MCF 10A (cell line): ENCODE measurements at regions of chr1 and their contacts with region 1.

Region 1: GRCh38 chr1:165914136-165914798 is 86.9 kb downstream of the UCK2 start:
- DNase-seq: peak; percentile 88
- H3K4me3 Mint-ChIP-seq: no peak overlapping the region
- H3K27ac Mint-ChIP-seq: peak overlapping the region; percentile 37
- H3K4me1 Mint-ChIP-seq: peaks cover 22% of the 10 kb centered on the region
- H3K27me3 Mint-ChIP-seq: no peaks in the 10 kb centered on the region
- CTCF ChIP-seq: peak; percentile 96

Region 2: DNA sequence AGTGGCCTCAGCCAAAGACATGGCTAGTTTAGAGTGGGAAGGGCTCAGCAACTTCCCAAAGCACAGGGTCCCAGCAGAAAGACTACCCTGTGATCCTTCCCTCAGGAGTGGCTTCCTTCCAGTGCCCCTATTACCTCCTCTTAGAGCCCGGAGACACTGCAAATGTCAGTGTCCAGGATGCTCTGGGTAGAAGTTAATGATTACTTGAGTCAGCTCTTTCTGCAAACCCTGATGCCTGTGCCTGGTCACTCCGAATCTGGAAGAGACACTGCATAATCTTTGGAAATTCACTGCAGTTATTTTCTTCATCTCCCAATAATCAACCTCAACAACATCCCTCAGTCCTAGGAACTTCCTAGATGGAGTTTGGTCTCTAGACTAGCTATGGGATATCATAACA is 310.5 kb before region 1 on chr1:
- CTCF ChIA-PET with region 1: interaction called, 161 read pairs
- POLR2A ChIA-PET with region 1: interaction called, 4 read pairs
- intact Hi-C with region 1: loop called (anchors 1 kb)
- DNase-seq: no peak
- H3K4me3 Mint-ChIP-seq: no peak overlapping the region
- H3K27ac Mint-ChIP-seq: no peak overlapping the region
- H3K4me1 Mint-ChIP-seq: peaks cover 11% of the 10 kb centered on the region
- H3K27me3 Mint-ChIP-seq: no peaks in the 10 kb centered on the region
- CTCF ChIP-seq: no peak

Region 3: DNA sequence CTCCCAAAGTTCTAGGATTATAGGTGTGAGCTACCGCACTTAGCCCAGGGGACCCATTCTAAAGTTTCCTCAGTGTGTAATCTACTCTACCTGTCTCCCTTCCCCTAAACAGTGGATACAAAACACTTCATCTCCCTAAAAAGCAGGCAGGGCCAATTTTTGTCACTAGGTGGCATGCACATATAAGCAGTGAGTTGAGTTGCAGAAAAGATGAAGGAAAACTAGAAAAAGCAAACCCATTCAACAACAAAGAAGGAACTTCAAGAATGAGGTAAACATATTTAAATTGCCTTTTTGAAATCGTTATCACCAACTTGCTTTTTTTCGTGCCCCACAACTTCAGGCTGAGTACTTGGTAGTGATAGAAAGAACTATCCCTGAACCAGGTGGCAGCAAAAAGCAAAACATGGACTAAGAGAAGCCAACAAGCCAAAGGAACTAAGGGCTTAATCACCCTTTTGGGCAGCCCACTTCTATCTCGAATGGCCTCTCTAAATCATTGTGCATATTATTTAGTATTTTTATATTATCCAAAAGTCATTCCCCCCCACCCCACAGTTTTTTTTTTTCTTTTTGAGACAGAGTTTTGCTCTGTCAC is 196.2 kb before region 1 on chr1:
- CTCF ChIA-PET with region 1: interaction called, 105 read pairs
- POLR2A ChIA-PET with region 1: interaction called, 3 read pairs
- intact Hi-C with region 1: loop called (anchors 1 kb)
- DNase-seq: peak; percentile 80
- H3K4me3 Mint-ChIP-seq: no peak overlapping the region
- H3K27ac Mint-ChIP-seq: no peak overlapping the region
- H3K4me1 Mint-ChIP-seq: no peaks in the 10 kb centered on the region
- H3K27me3 Mint-ChIP-seq: no peaks in the 10 kb centered on the region
- CTCF ChIP-seq: peak; percentile 87

Region 4: DNA sequence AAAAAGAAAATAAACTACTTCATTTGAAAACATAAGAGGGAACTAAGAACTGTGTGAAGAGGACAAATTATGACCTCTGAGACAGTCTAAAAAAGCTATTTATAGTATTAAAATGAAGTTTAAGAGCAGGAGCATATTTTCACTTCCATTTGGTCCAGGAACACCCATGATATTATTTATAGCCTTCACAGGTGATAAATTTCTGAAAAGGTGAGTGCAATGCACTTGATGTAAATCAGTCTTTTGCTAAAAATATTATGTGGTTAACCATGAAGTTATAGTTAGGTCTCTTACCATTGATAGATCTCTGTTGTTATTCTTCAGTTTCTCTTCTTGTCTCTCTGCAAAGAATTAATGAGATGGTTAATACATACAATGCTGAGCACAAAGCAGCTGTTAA is 160.3 kb before region 1 on chr1:
- CTCF ChIA-PET with region 1: interaction called, 18 read pairs
- POLR2A ChIA-PET with region 1: no interaction called
- intact Hi-C with region 1: no loop called
- DNase-seq: no peak
- H3K4me3 Mint-ChIP-seq: no peak overlapping the region
- H3K27ac Mint-ChIP-seq: no peak overlapping the region
- H3K4me1 Mint-ChIP-seq: peaks cover 7% of the 10 kb centered on the region
- H3K27me3 Mint-ChIP-seq: no peaks in the 10 kb centered on the region
- CTCF ChIP-seq: no peak

Region 5: DNA sequence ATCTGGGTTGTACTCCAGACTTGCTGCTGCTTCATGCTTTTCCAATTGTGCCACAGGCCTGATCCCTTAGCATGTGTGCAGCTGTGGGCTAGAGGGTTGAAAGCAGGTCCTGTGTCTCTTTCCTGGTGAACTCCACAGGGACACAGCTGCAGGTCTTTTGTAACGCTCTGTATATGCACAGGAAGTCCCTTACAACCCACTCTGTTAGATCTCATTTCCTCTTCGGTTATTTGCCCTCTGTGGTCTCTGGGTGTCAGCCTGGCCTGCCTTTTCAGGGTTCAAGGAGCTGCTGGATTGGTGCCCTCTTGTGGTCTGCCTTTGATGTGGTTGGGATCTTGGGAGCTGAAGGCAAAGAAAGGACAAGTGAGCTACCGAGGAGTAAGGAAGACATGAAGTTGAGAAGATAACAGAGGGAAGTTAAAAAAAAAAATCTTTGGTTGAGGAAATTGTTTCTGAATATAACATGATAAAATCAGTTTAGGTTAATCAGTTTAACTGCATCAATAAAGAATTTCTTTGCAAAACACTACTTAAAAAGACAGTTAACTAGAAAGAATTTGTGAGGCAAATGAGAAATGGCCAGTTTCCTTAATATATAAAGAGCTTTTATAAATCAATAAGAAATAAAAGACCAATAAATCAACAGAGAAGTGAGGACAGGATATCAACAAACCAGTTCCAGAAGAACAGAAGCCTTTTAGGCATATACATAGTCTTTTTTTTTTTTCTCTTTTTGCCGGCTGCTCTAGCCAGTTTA is 42.8 kb before region 1 on chr1:
- CTCF ChIA-PET with region 1: interaction called, 14 read pairs
- POLR2A ChIA-PET with region 1: no interaction called
- intact Hi-C with region 1: no loop called
- DNase-seq: peak; percentile 85
- H3K4me3 Mint-ChIP-seq: no peak overlapping the region
- H3K27ac Mint-ChIP-seq: peak overlapping the region; percentile 5
- H3K4me1 Mint-ChIP-seq: peaks cover 33% of the 10 kb centered on the region
- H3K27me3 Mint-ChIP-seq: no peaks in the 10 kb centered on the region
- CTCF ChIP-seq: peak; percentile 25

Region 6: GRCh38 chr1:165928075-165928731 is 13.9 kb after region 1 on chr1:
- CTCF ChIA-PET with region 1: interaction called, 95 read pairs
- POLR2A ChIA-PET with region 1: no interaction called
- intact Hi-C with region 1: no loop called
- DNase-seq: peak; percentile 82
- H3K4me3 Mint-ChIP-seq: no peak overlapping the region
- H3K27ac Mint-ChIP-seq: no peak overlapping the region
- H3K4me1 Mint-ChIP-seq: no peaks in the 10 kb centered on the region
- H3K27me3 Mint-ChIP-seq: no peaks in the 10 kb centered on the region
- CTCF ChIP-seq: peak; percentile 78

Region 7: DNA sequence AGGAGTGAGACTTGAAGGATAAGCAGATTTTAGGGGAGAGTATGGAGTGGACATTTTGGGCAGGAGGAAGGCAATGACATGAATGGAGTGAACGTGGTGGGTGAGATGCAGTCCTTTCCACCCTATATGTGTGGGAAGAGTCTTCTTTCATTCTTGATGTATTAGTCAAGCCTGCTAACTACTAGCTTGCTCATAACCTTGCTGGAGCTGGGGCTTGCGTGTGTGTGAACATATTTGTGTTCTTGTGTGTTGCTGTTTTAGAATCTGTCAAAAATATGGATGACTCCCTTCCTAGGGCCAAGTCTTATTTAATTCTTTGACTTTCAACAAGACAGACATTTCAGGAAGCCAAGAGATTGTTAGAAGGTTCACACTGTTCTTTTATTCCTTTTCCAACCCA is 45.9 kb after region 1 on chr1:
- CTCF ChIA-PET with region 1: no interaction called
- POLR2A ChIA-PET with region 1: no interaction called
- intact Hi-C with region 1: no loop called
- DNase-seq: no peak
- H3K4me3 Mint-ChIP-seq: no peak overlapping the region
- H3K27ac Mint-ChIP-seq: no peak overlapping the region
- H3K4me1 Mint-ChIP-seq: no peaks in the 10 kb centered on the region
- H3K27me3 Mint-ChIP-seq: peaks cover 13% of the 10 kb centered on the region
- CTCF ChIP-seq: no peak

Region 8: GRCh38 chr1:165974598-165975131 is 60.4 kb after region 1 on chr1:
- CTCF ChIA-PET with region 1: no interaction called
- POLR2A ChIA-PET with region 1: no interaction called
- intact Hi-C with region 1: no loop called
- DNase-seq: no peak
- H3K4me3 Mint-ChIP-seq: no peak overlapping the region
- H3K27ac Mint-ChIP-seq: no peak overlapping the region
- H3K4me1 Mint-ChIP-seq: no peaks in the 10 kb centered on the region
- H3K27me3 Mint-ChIP-seq: no peaks in the 10 kb centered on the region
- CTCF ChIP-seq: no peak

Region 9: GRCh38 chr1:166089804-166090203 is 175.5 kb after region 1 on chr1:
- CTCF ChIA-PET with region 1: no interaction called
- POLR2A ChIA-PET with region 1: no interaction called
- intact Hi-C with region 1: no loop called
- DNase-seq: no peak
- H3K4me3 Mint-ChIP-seq: no peak overlapping the region
- H3K27ac Mint-ChIP-seq: no peak overlapping the region
- H3K4me1 Mint-ChIP-seq: no peaks in the 10 kb centered on the region
- H3K27me3 Mint-ChIP-seq: no peaks in the 10 kb centered on the region
- CTCF ChIP-seq: no peak

Region 10: GRCh38 chr1:166283190-166283589 is 368.9 kb after region 1 on chr1:
- CTCF ChIA-PET with region 1: no interaction called
- POLR2A ChIA-PET with region 1: no interaction called
- intact Hi-C with region 1: no loop called
- DNase-seq: no peak
- H3K4me3 Mint-ChIP-seq: no peak overlapping the region
- H3K27ac Mint-ChIP-seq: no peak overlapping the region
- H3K4me1 Mint-ChIP-seq: no peaks in the 10 kb centered on the region
- H3K27me3 Mint-ChIP-seq: peaks cover 9% of the 10 kb centered on the region
- CTCF ChIP-seq: no peak